Esophagus muscularis mucosa (tissue), 4 donors: ENCODE measurements at regions of chr2 and their contacts with region 1.

Region 1: GRCh38 chr2:212892193-212892592 is 259.2 kb downstream of the IKZF2 start:
- DNase-seq: no peak
- H3K4me3 ChIP-seq: no peak overlapping the region
- H3K27ac ChIP-seq: no peak overlapping the region
- H3K4me1 ChIP-seq: peaks cover 0 to 6% (median 0%) of the 10 kb centered on the region in 4 donors
- H3K27me3 ChIP-seq: no peaks in the 10 kb centered on the region
- CTCF ChIP-seq: peak; percentile 33 to 48 (median 42)
- EP300 ChIP-seq: no peak
- POLR2A ChIP-seq: no peak

Region 2: GRCh38 chr2:212686285-212686895 is 205.8 kb before region 1 on chr2:
- intact Hi-C with region 1: loop called (anchors 10 kb)
- DNase-seq: no peak
- H3K4me3 ChIP-seq: no peak overlapping the region
- H3K27ac ChIP-seq: no peak overlapping the region
- H3K4me1 ChIP-seq: peaks cover 0 to 4% (median 1%) of the 10 kb centered on the region in 4 donors
- H3K27me3 ChIP-seq: no peaks in the 10 kb centered on the region
- CTCF ChIP-seq: peak; percentile 78 to 85 (median 79)
- EP300 ChIP-seq: no peak
- POLR2A ChIP-seq: no peak

Region 3: GRCh38 chr2:212777020-212777491 is 115.1 kb before region 1 on chr2:
- intact Hi-C with region 1: loop called (anchors 2 kb)
- DNase-seq: no peak
- H3K4me3 ChIP-seq: no peak overlapping the region
- H3K27ac ChIP-seq: no peak overlapping the region
- H3K4me1 ChIP-seq: peaks cover 0 to 6% (median 3%) of the 10 kb centered on the region in 4 donors
- H3K27me3 ChIP-seq: no peaks in the 10 kb centered on the region
- CTCF ChIP-seq: peak; percentile 65 to 73 (median 68)
- EP300 ChIP-seq: no peak
- POLR2A ChIP-seq: no peak

Region 4: DNA sequence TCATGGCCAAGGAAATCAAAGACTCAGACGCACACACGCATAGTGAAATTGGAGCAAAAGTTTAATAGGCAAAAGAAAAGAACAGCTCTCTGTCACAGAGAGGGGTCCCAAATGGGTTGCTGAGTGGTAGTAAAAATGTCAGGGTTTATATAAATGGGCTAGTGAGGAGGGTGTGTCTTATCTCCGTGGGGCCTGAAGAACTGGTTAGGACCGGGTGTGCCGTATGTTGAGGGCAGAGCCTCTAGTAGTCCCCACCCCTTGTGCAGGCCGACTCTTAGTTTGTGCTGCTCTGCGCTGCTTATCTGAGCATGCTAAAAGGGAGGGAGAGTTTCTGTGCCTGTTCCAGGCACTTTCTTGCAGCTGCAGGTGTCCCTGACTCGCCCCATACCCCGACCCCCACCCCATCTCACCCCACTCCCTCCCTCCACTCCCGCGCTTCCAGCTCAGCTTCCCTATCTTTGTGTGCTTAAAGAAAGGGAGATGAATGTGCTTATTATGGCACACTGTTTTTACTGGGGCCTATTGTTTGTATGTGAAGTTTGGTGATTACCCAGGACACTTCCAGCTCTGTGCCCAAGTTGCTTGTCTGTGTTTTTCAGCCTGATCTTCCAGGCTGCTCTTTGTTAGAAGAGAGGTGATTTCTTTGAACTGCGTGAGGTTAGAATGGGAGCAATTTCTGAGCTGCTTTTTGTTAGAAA is 559.5 kb after region 1 on chr2:
- intact Hi-C with region 1: no loop called
- DNase-seq: no peak
- H3K4me3 ChIP-seq: no peak overlapping the region
- H3K27ac ChIP-seq: no peak overlapping the region
- H3K4me1 ChIP-seq: no peaks in the 10 kb centered on the region
- H3K27me3 ChIP-seq: no peaks in the 10 kb centered on the region
- CTCF ChIP-seq: no peak
- EP300 ChIP-seq: no peak
- POLR2A ChIP-seq: no peak